Right ventricle myocardium inferior (tissue), 1 donor: ENCODE measurements at regions of chr1 and their contacts with region 1.

Region 1: GRCh38 chr1:27671964-27672749 is at the start of gene IFI6:
- DNase-seq: peak; percentile 87
- ATAC-seq: peak; percentile 98
- total RNA-seq, gene IFI6: 34.6 TPM

Region 2: DNA sequence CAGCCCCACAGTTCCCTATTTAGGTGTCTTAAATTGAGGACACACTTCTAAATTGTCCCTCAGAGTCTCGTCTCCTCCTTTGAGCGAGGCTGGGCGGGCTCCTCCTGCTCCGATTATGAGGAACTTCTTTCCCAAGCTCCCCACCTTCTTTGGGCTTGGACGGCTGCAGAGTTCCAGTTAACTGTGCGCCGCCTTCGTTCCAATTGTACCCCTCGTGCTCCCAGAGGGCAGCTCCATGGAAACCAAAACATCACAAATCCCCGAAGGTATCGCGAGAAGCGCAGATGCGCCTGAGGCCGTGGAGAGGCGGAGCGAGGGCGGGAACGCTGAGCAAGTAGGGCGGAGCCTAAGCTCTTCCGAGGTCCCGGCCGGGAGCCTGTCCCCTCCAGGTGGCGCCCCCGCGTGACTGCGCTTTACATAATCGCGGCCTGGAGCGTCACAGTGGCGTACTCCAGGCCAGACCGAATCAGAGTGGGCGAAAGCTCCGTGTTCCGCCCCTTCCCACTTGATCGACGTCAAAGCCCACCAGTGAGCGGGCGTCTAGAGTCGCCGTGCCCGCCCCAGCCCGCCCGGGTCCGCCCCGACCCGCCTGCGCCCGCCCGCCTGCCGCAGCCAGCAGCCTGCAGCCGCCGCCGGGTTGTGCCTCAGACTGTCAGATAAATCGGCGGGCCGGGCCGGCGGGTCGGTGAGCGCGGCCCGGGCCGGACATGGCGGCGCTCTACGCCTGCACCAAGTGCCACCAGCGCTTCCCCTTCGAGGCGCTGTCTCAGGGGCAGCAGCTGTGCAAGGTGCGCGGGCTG is 53.4 kb after region 1 on chr1 and contains the start of gene FAM76A:
- intact Hi-C with region 1: loop called (anchors 2 kb)
- DNase-seq: peak; percentile 100
- ATAC-seq: peak; percentile 98
- total RNA-seq, gene FAM76A: 10.6 TPM

Region 3: DNA sequence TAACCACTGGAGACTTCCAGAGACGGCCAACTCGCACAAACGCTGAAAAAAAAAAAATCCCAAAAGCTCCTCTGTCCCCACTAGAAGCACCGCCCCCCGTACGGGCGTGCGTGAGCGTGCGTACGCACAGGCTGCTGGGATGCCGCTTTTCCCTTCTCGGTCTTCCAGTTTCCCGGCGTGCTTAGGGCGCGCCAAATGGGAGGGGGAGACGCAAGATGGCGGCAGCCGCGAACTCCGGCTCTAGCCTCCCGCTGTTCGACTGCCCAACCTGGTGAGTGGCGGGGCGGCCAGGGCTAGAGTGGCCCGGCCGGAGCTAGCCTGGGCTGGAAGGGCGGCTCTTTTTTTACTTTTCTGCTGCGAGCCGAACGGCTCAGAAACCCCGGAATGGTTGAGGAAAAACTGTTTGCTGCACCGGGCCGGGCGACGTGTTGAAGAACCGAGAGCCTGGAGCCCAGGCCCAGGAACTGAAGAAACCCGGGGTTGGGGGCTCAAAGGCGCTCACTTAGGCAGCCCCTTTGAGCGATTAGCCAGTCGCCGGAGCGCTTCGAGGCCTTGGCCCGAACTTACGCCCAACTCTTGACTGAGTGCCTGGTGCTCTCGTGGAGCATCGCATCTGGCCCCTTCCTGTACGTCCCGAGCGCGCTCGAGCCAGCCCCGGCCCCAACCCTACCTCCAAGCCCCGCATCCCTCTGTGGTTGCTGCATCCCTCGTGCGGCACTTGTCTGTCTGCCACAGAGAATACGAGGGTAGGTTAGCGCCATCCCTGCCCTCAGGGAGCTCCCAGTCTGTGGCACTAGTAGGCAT is 158.7 kb after region 1 on chr1 and contains the start of gene PPP1R8:
- intact Hi-C with region 1: loop called (anchors 5 kb)
- DNase-seq: peak; percentile 96
- ATAC-seq: peak; percentile 100
- total RNA-seq, gene PPP1R8: 23.9 TPM